CD8-positive, alpha-beta memory T cell (primary cell): ENCODE measurements at regions of chr18 and their contacts with region 1.

Region 1: GRCh38 chr18:2958819-2959298 is 54.1 kb downstream of the LPIN2 start:
- DNase-seq: peak in 3 of 5 donors; percentile 18 to 63 (median 23)
- H3K4me3 ChIP-seq: peak overlapping the region; percentile 12
- H3K4me3 Mint-ChIP-seq: peak overlapping the region; percentile 59 to 91 (median 80)
- H3K27ac ChIP-seq: peak overlapping the region; percentile 12
- H3K27ac Mint-ChIP-seq: peak overlapping the region; percentile 94 to 99 (median 96)
- H3K4me1 ChIP-seq: peaks cover 93% of the 10 kb centered on the region
- H3K4me1 Mint-ChIP-seq: peaks cover 88 to 95% (median 95%) of the 10 kb centered on the region in 3 donors
- H3K27me3 ChIP-seq: no peaks in the 10 kb centered on the region
- H3K27me3 Mint-ChIP-seq: no peaks in the 10 kb centered on the region

Region 2: GRCh38 chr18:2978646-2979045 is 19.8 kb after region 1 on chr18:
- CTCF ChIA-PET with region 1: interaction called, 75 read pairs
- POLR2A ChIA-PET with region 1: interaction called, 50 read pairs
- DNase-seq: peak in 2 of 5 donors; percentile 16 to 18
- H3K4me3 ChIP-seq: peak overlapping the region; percentile 63
- H3K4me3 Mint-ChIP-seq: peak overlapping the region; percentile 75 to 92 (median 87)
- H3K27ac ChIP-seq: peak overlapping the region; percentile 5
- H3K27ac Mint-ChIP-seq: peak overlapping the region; percentile 78 to 99 (median 96)
- H3K4me1 ChIP-seq: peaks cover 76% of the 10 kb centered on the region
- H3K4me1 Mint-ChIP-seq: peaks cover 69 to 94% (median 94%) of the 10 kb centered on the region in 3 donors
- H3K27me3 ChIP-seq: no peaks in the 10 kb centered on the region
- H3K27me3 Mint-ChIP-seq: no peaks in the 10 kb centered on the region